ENCODE measurements at regions of chr21 and their contacts with region 1.

Region 1: DNA sequence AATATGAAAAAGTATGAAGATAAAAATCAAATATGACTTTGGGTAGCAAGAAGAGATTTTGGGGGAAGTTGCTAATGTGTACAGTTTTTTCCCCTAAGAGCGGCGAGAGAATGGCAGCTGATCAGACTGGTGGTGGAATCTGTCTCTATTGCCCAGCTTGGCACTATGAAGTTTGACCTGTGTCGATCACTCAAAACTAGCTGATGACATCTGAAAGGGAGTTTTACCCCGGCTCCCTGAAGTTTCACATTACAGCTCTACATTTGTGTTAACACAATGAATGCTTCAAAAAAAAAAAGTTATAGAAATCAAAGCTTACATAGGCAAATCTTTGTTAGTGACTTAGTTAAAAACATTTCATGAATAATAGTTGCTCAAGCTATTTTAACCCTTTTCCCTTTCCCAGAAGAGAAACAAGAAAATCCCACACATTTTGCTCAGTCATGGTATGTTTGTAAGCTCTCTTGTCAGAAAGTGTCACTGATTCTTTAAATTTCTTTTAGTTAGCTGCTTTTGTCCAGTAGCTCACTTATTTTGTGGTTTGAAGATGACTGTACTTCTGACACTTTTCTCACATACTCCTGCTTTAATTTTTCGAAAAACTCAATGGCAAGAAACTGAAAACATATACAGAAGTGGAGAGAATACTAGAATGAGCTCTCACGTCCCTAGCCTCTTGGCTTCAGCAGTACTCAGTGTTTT is 41.3 kb downstream of the DYRK1A start:
- DNase-seq: no peak
- ATAC-seq: peak; percentile 44 to 56 (median 49)
- H3K4me3 ChIP-seq: no peak overlapping the region
- H3K4me3 Mint-ChIP-seq: peak overlapping the region; percentile 56
- H3K27ac ChIP-seq: peak overlapping the region; percentile 24
- H3K27ac Mint-ChIP-seq: peak overlapping the region; percentile 80 to 85
- H3K4me1 ChIP-seq: peaks cover 36% of the 10 kb centered on the region
- H3K4me1 Mint-ChIP-seq: peaks cover 84 to 87% of the 10 kb centered on the region in 2 donors
- H3K27me3 ChIP-seq: no peaks in the 10 kb centered on the region
- H3K27me3 Mint-ChIP-seq: no peaks in the 10 kb centered on the region
- CTCF ChIP-seq: no peak

Region 2: GRCh38 chr21:37220981-37221664 is 186.7 kb before region 1 on chr21:
- intact Hi-C with region 1: no loop called
- DNase-seq: peak; percentile 85 to 95
- ATAC-seq: peak; percentile 67 to 85 (median 76)
- H3K4me3 ChIP-seq: peak overlapping the region; percentile 69
- H3K4me3 Mint-ChIP-seq: peak overlapping the region; percentile 95
- H3K27ac ChIP-seq: peak overlapping the region; percentile 77
- H3K27ac Mint-ChIP-seq: peak overlapping the region; percentile 89 to 91
- H3K4me1 ChIP-seq: peaks cover 44% of the 10 kb centered on the region
- H3K4me1 Mint-ChIP-seq: peaks cover 51 to 53% of the 10 kb centered on the region in 2 donors
- H3K27me3 ChIP-seq: no peaks in the 10 kb centered on the region
- H3K27me3 Mint-ChIP-seq: no peaks in the 10 kb centered on the region
- CTCF ChIP-seq: no peak

Region 3: GRCh38 chr21:37383086-37383485 is 24.8 kb before region 1 on chr21:
- intact Hi-C with region 1: no loop called
- DNase-seq: no peak
- ATAC-seq: no peak
- H3K4me3 ChIP-seq: no peak overlapping the region
- H3K4me3 Mint-ChIP-seq: peak overlapping the region; percentile 51
- H3K27ac ChIP-seq: no peak overlapping the region
- H3K27ac Mint-ChIP-seq: peak overlapping the region; percentile 21 to 63
- H3K4me1 ChIP-seq: peaks cover 39% of the 10 kb centered on the region
- H3K4me1 Mint-ChIP-seq: peaks cover 84 to 88% of the 10 kb centered on the region in 2 donors
- H3K27me3 ChIP-seq: no peaks in the 10 kb centered on the region
- H3K27me3 Mint-ChIP-seq: no peaks in the 10 kb centered on the region
- CTCF ChIP-seq: no peak

Region 4: DNA sequence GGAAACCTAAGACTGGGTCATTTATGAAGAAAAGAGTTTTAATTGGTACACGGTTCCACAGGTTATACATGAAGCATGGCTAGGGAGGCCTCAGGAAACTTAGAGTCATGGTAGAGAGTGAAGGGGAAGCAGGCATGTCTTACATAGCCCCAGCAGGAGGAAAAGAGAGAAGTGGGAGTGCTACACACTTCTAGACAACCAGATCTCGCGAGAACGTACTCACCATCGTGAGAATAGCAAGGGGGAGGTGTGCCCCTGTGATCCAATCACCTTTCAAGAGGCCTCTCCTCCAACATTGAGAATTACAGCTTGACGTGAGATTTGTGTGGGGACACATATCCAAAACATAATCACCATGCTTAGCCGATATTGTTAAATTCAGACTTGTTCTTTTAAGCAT is 21.5 kb after region 1 on chr21:
- intact Hi-C with region 1: loop called (anchors 2 kb)
- DNase-seq: no peak
- ATAC-seq: no peak
- H3K4me3 ChIP-seq: no peak overlapping the region
- H3K4me3 Mint-ChIP-seq: no peak overlapping the region
- H3K27ac ChIP-seq: no peak overlapping the region
- H3K27ac Mint-ChIP-seq: peak overlapping the region; percentile 9 to 21
- H3K4me1 ChIP-seq: peaks cover 5% of the 10 kb centered on the region
- H3K4me1 Mint-ChIP-seq: peaks cover 56 to 58% of the 10 kb centered on the region in 2 donors
- H3K27me3 ChIP-seq: no peaks in the 10 kb centered on the region
- H3K27me3 Mint-ChIP-seq: no peaks in the 10 kb centered on the region
- CTCF ChIP-seq: no peak

Region 5: GRCh38 chr21:37445228-37445627 is 37.4 kb after region 1 on chr21:
- intact Hi-C with region 1: loop called (anchors 5 kb)
- DNase-seq: no peak
- ATAC-seq: no peak
- H3K4me3 ChIP-seq: no peak overlapping the region
- H3K4me3 Mint-ChIP-seq: no peak overlapping the region
- H3K27ac ChIP-seq: no peak overlapping the region
- H3K27ac Mint-ChIP-seq: peak overlapping the region in 1 of 2 donors; percentile 2
- H3K4me1 ChIP-seq: peaks cover 16% of the 10 kb centered on the region
- H3K4me1 Mint-ChIP-seq: peaks cover 81 to 89% of the 10 kb centered on the region in 2 donors
- H3K27me3 ChIP-seq: no peaks in the 10 kb centered on the region
- H3K27me3 Mint-ChIP-seq: no peaks in the 10 kb centered on the region
- CTCF ChIP-seq: no peak